ENCODE measurements at regions of chr11 and their contacts with region 1.

Region 1: GRCh38 chr11:114762408-114762807 is 84.1 kb downstream of the NXPE2 start:
- DNase-seq: peak; percentile 86
- H3K4me3 ChIP-seq: no peak overlapping the region
- H3K27ac ChIP-seq: no peak overlapping the region
- H3K4me1 ChIP-seq: peaks cover 0 to 3% (median 0%) of the 10 kb centered on the region in 4 donors
- H3K27me3 ChIP-seq: no peaks in the 10 kb centered on the region
- CTCF ChIP-seq: peak; percentile 65 to 79 (median 76)
- EP300 ChIP-seq: no peak
- POLR2A ChIP-seq: no peak

Region 2: DNA sequence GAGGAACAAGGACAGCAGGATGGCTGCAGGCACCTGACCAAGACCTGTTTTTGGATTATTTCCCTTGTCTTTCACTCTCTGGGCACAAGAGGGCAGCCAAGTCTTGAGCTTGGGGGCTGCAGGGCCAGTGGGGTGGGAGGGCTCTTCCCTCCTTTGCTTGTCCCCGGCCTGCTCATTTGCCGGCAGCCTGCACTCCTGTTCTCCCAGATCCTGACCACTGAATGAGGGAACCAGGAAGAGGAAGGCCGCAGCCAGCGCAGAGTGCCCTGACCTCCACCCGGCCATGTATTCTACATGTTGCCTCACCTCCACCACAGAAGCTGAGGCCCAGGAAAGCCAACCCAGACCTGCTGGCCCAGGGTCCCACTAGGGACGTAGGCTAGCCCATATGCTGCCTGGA is 481.7 kb before region 1 on chr11:
- in situ Hi-C with region 1: no loop called
- intact Hi-C with region 1: loop called (anchors 5 kb)
- DNase-seq: no peak
- H3K4me3 ChIP-seq: no peak overlapping the region
- H3K27ac ChIP-seq: peak overlapping the region in 1 of 4 donors; percentile 21
- H3K4me1 ChIP-seq: peaks cover 0 to 15% (median 3%) of the 10 kb centered on the region in 4 donors
- H3K27me3 ChIP-seq: no peaks in the 10 kb centered on the region
- CTCF ChIP-seq: peak; percentile 43 to 50 (median 48)
- EP300 ChIP-seq: no peak
- POLR2A ChIP-seq: no peak

Region 3: GRCh38 chr11:114340311-114341131 is 421.9 kb before region 1 on chr11:
- in situ Hi-C with region 1: loop called in 3 of 4 experiments (anchors 10 to 25 kb)
- intact Hi-C with region 1: loop called (anchors 10 kb)
- DNase-seq: peak; percentile 37
- H3K4me3 ChIP-seq: peak overlapping the region in 1 of 4 donors; percentile 23
- H3K27ac ChIP-seq: peak overlapping the region in 2 of 4 donors; percentile 4 to 30
- H3K4me1 ChIP-seq: peaks cover 0 to 10% (median 8%) of the 10 kb centered on the region in 4 donors
- H3K27me3 ChIP-seq: no peaks in the 10 kb centered on the region
- CTCF ChIP-seq: peak; percentile 76 to 82 (median 78)
- EP300 ChIP-seq: no peak
- POLR2A ChIP-seq: no peak

Region 4: GRCh38 chr11:114705280-114706024 is 57.0 kb before region 1 on chr11:
- in situ Hi-C with region 1: no loop called
- intact Hi-C with region 1: no loop called
- DNase-seq: peak; percentile 35
- H3K4me3 ChIP-seq: no peak overlapping the region
- H3K27ac ChIP-seq: peak overlapping the region; percentile 23 to 55 (median 40)
- H3K4me1 ChIP-seq: peaks cover 0 to 14% (median 0%) of the 10 kb centered on the region in 4 donors
- H3K27me3 ChIP-seq: no peaks in the 10 kb centered on the region
- CTCF ChIP-seq: peak in 1 of 5 experiments; percentile 13
- EP300 ChIP-seq: no peak
- POLR2A ChIP-seq: no peak

Region 5: GRCh38 chr11:114819028-114819427 is 56.6 kb after region 1 on chr11:
- in situ Hi-C with region 1: loop called in 1 of 4 experiments (anchors 10 kb)
- intact Hi-C with region 1: no loop called
- DNase-seq: no peak
- H3K4me3 ChIP-seq: no peak overlapping the region
- H3K27ac ChIP-seq: no peak overlapping the region
- H3K4me1 ChIP-seq: no peaks in the 10 kb centered on the region
- H3K27me3 ChIP-seq: peaks cover 16% of the 10 kb centered on the region
- CTCF ChIP-seq: no peak
- EP300 ChIP-seq: no peak
- POLR2A ChIP-seq: no peak